H1 (cell line): ENCODE measurements at regions of chr6 and their contacts with region 1.

Region 1: DNA sequence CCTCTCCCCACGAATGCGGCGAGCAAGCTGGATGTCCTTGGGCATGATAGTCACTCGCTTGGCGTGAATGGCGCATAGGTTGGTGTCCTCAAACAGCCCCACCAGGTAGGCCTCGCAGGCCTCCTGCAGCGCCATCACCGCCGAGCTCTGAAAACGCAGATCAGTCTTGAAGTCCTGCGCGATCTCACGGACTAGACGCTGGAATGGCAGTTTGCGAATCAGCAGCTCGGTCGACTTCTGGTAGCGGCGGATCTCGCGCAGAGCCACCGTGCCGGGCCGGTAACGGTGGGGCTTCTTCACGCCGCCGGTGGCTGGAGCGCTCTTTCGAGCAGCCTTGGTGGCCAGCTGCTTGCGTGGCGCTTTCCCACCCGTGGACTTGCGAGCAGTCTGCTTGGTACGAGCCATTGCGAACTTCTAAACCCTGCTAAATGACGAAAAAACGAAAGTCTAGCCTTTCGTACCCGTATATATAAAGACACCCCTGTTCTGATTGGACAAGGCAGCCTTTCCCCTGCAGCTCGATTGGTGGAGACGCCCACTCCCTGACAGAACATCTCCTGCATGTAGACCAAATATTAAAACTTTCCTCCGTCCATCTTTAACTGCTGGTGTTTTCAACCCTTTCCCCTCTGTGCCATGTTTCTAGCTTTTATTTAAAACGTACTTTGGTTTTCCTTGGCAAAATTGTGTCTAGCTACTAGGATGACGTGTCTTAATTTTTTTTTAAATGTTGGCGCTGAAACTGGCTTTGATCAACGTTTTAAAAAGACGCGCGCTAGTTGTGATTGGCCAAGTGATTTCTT is 109.8 kb downstream of the HFE start:
- DNase-seq: peak in 1 of 2 experiments; percentile 76
- H3K4me3 ChIP-seq: peak overlapping the region; percentile 85 to 98 (median 89)
- H3K27ac ChIP-seq: peak overlapping the region; percentile 82
- H3K4me1 ChIP-seq: peaks cover 0 to 1% (median 0%) of the 10 kb centered on the region in 4 experiments; a peak in 1 of 7 replicates
- H3K27me3 ChIP-seq: no peaks in the 10 kb centered on the region
- CTCF ChIP-seq: no peak
- EP300 ChIP-seq: no peak
- POLR2A ChIP-seq: peak; percentile 99
- RAD21 ChIP-seq: no peak

Region 2: GRCh38 chr6:26054857-26055669 is 142.0 kb before region 1 on chr6:
- CTCF ChIA-PET with region 1: no interaction called
- POLR2A ChIA-PET with region 1: interaction called, 56 read pairs
- DNase-seq: peak; percentile 73 to 75
- H3K4me3 ChIP-seq: peak overlapping the region; percentile 82 to 95 (median 83)
- H3K27ac ChIP-seq: peak overlapping the region; percentile 93
- H3K4me1 ChIP-seq: peaks cover 0 to 3% (median 0%) of the 10 kb centered on the region in 4 experiments; a peak in 1 of 7 replicates
- H3K27me3 ChIP-seq: no peaks in the 10 kb centered on the region
- CTCF ChIP-seq: no peak
- EP300 ChIP-seq: no peak
- POLR2A ChIP-seq: peak; percentile 95 to 97
- RAD21 ChIP-seq: peak; percentile 14 to 29; a peak in 2 of 4 replicates

Region 3: DNA sequence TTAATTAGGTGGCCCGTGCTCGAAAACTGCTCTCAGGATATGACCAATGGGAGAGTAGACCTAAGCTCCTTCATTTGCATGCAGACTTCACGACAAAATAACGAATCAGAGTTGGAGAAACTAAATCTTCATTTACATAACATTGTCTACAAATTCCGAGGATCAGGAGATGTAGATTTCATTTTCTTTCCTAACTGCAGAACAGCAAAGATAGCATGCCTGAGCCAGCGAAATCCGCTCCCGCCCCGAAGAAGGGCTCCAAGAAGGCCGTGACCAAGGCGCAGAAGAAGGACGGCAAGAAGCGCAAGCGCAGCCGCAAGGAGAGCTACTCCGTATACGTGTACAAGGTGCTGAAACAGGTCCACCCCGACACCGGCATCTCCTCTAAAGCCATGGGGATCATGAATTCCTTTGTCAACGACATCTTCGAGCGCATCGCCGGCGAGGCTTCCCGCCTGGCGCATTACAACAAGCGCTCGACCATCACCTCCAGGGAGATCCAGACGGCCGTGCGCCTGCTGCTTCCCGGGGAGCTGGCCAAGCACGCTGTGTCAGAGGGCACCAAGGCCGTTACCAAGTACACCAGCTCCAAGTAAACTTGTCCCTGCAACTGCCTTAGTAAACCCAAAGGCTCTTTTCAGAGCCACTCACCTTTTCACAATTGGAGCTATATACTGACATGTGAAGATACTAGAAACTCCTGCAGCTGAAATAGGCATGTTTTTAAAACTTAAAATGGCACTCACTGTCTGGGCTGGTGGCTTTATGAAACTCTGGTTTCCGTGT is 13.3 kb before region 1 on chr6:
- CTCF ChIA-PET with region 1: interaction called, 19 read pairs
- POLR2A ChIA-PET with region 1: interaction called, 1,671 read pairs
- DNase-seq: peak in 1 of 2 experiments; percentile 82
- H3K4me3 ChIP-seq: peak overlapping the region; percentile 45 to 73 (median 70)
- H3K27ac ChIP-seq: peak overlapping the region; percentile 97
- H3K4me1 ChIP-seq: peaks cover 0 to 17% (median 8%) of the 10 kb centered on the region in 4 experiments; a peak in 5 of 7 replicates
- H3K27me3 ChIP-seq: no peaks in the 10 kb centered on the region
- CTCF ChIP-seq: no peak
- EP300 ChIP-seq: no peak
- POLR2A ChIP-seq: peak; percentile 94 to 99
- RAD21 ChIP-seq: no peak

Region 4: DNA sequence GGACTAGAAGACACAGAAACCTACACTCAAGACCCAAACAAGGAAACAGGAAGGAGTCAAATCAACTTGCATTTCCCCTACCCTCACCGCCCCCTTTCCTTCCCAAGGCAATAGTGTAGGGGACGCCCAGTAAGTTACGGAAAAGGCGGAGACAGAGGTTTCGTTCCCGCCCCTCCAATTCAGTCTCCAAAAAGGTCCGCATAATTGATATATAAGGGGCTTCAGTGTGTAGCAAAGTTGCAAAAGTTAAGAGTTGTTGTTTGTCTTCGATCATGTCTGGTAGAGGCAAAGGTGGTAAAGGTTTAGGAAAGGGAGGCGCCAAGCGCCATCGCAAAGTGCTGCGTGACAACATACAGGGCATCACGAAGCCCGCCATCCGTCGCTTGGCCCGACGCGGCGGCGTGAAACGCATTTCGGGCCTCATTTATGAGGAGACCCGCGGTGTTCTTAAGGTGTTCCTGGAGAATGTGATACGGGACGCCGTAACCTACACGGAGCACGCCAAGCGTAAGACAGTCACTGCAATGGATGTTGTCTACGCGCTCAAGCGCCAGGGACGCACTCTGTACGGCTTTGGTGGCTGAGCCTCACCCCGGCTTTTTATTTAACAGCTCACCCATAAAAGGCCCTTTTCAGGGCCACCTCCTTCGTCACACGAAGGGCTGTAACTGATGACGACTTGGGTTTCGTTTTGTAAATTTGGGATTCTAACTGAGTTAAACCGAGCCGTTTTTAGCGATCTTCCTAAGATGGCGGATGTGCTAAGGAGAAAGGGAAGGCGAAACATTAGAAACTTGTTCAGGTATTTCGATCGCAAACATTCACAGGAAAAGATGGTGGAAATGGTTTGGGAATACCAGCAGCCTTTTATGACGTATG is 43.3 kb after region 1 on chr6:
- CTCF ChIA-PET with region 1: no interaction called
- POLR2A ChIA-PET with region 1: interaction called, 477 read pairs
- DNase-seq: peak in 1 of 2 experiments; percentile 78
- H3K4me3 ChIP-seq: peak overlapping the region; percentile 64 to 96 (median 87)
- H3K27ac ChIP-seq: peak overlapping the region; percentile 96
- H3K4me1 ChIP-seq: peaks cover 1 to 8% (median 4%) of the 10 kb centered on the region in 4 experiments; a peak in 6 of 7 replicates
- H3K27me3 ChIP-seq: no peaks in the 10 kb centered on the region
- CTCF ChIP-seq: no peak
- EP300 ChIP-seq: peak in 1 of 2 experiments; percentile 87; a peak in 1 of 3 replicates
- POLR2A ChIP-seq: peak; percentile 100
- RAD21 ChIP-seq: no peak

Region 5: GRCh38 chr6:27838058-27838944 is 1641.3 kb after region 1 on chr6:
- CTCF ChIA-PET with region 1: no interaction called
- POLR2A ChIA-PET with region 1: interaction called, 28 read pairs
- DNase-seq: peak; percentile 76 to 87
- H3K4me3 ChIP-seq: peak overlapping the region; percentile 77 to 96 (median 93)
- H3K27ac ChIP-seq: peak overlapping the region; percentile 98
- H3K4me1 ChIP-seq: peaks cover 0 to 5% (median 2%) of the 10 kb centered on the region in 4 experiments; a peak in 1 of 7 replicates
- H3K27me3 ChIP-seq: no peaks in the 10 kb centered on the region
- CTCF ChIP-seq: no peak
- EP300 ChIP-seq: no peak
- POLR2A ChIP-seq: peak; percentile 88 to 91
- RAD21 ChIP-seq: no peak